Mucosa of descending colon (tissue), 3 donors: ENCODE measurements at regions of chr17 and their contacts with region 1.

Region 1: GRCh38 chr17:3865176-3865575 is 19.1 kb upstream of the NCBP3 start:
- DNase-seq: peak in 1 of 3 donors; percentile 55
- ATAC-seq: peak; percentile 17
- H3K4me3 ChIP-seq: no peak overlapping the region
- H3K4me1 ChIP-seq: no peaks in the 10 kb centered on the region
- CTCF ChIP-seq: no peak

Region 2: GRCh38 chr17:3913531-3914311 is 48.5 kb after region 1 on chr17:
- intact Hi-C with region 1: loop called (anchors 10 kb)
- DNase-seq: peak; percentile 87 to 90 (median 89)
- ATAC-seq: peak; percentile 82
- H3K4me3 ChIP-seq: no peak overlapping the region
- H3K4me1 ChIP-seq: peaks cover 23% of the 10 kb centered on the region
- CTCF ChIP-seq: peak; percentile 97